Endothelial cell of umbilical vein (primary cell): ENCODE measurements at regions of chr9 and their contacts with region 1.

Region 1: DNA sequence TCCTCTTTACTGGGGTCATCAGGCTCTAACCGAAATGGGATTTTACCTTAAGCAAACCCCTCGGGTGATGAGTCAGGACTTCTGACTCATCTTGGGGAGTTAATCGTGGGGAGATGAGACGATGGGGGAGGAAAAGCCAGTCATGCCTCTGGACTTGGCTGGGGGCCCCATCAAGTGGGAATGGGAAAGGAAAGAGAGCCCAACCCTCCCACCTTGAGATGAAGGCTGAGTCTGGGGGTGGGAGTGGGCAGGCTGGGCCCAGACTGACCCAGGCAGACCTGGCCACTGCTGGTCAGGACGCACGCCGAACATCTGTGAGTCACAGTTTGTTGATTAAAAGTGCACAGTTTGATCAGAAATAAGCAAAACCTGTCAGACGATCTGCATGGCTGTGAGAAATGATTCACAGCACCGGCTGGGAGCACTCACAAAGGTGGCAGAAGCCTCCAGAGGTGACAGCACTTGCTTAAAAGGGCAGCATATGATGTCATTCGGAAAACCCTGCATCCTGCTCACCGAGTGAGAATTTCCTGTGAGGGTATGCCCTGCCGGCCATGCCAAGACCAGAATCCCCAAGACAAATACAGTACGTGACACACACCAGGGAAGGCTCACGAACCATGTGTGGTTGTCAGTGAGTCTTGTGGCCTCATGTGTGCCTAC is 50.0 kb upstream of the SLC25A51 start:
- DNase-seq: peak; percentile 97
- H3K4me3 ChIP-seq: no peak overlapping the region
- H3K27ac ChIP-seq: peak overlapping the region; percentile 71
- H3K4me1 ChIP-seq: peaks cover 21% of the 10 kb centered on the region
- H3K27me3 ChIP-seq: no peaks in the 10 kb centered on the region
- CTCF ChIP-seq: no peak
- POLR2A ChIP-seq: peak; percentile 46

Region 2: GRCh38 chr9:37923136-37923795 is 30.6 kb before region 1 on chr9:
- CTCF ChIA-PET with region 1: no interaction called
- POLR2A ChIA-PET with region 1: no interaction called
- dilution Hi-C with region 1: no loop called
- intact Hi-C with region 1: no loop called
- DNase-seq: no peak
- H3K4me3 ChIP-seq: no peak overlapping the region
- H3K27ac ChIP-seq: no peak overlapping the region
- H3K4me1 ChIP-seq: peaks cover 22% of the 10 kb centered on the region
- H3K27me3 ChIP-seq: no peaks in the 10 kb centered on the region
- CTCF ChIP-seq: no peak
- POLR2A ChIP-seq: no peak

Region 3: GRCh38 chr9:37938121-37938891 is 15.6 kb before region 1 on chr9:
- CTCF ChIA-PET with region 1: interaction called, 3 read pairs
- POLR2A ChIA-PET with region 1: no interaction called
- dilution Hi-C with region 1: no loop called
- intact Hi-C with region 1: loop called (anchors 2 kb)
- DNase-seq: peak; percentile 90
- H3K4me3 ChIP-seq: no peak overlapping the region
- H3K27ac ChIP-seq: peak overlapping the region; percentile 77
- H3K4me1 ChIP-seq: peaks cover 39% of the 10 kb centered on the region
- H3K27me3 ChIP-seq: no peaks in the 10 kb centered on the region
- CTCF ChIP-seq: no peak
- POLR2A ChIP-seq: no peak

Region 4: DNA sequence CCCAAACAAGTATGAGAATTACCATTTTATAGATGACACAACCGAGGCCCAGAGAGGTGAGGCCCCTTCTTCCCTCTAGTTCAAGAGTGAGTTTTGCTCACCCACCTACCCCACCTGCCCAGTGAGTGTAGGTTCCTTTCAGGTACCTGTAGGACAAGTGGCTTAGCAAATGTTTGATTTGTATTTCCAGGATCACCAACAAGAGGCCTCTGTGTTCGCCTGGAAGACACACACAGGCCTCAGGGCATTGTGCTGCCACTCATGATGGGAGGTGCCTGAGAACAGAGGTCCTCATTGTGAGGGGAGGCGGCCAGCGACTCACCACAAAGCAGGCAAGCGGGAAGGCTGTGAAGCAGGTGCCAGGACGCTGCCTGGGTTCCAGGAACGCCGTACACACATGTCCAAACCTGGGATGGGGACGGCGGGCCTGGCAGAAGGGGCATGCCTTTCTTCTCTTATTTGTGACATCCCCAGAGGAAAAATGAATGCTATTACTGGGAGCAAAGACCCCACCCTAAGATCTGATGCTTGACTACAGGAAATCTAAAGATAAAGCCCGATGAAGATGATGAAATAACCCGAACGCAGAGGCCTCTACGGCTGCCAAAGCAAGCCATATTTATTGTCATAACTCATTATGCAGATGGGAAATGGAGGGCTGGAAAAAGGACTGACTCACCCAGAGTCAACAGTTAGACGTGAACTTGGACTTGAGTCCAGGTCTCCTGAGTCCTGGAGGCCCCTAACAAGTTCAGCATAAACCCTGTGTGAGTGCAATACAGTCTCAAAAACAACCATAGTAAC is 10.2 kb after region 1 on chr9:
- CTCF ChIA-PET with region 1: interaction called, 3 read pairs
- POLR2A ChIA-PET with region 1: no interaction called
- dilution Hi-C with region 1: no loop called
- intact Hi-C with region 1: loop called (anchors 1 kb)
- DNase-seq: peak; percentile 94
- H3K4me3 ChIP-seq: no peak overlapping the region
- H3K27ac ChIP-seq: peak overlapping the region; percentile 67
- H3K4me1 ChIP-seq: peaks cover 41% of the 10 kb centered on the region
- H3K27me3 ChIP-seq: no peaks in the 10 kb centered on the region
- CTCF ChIP-seq: no peak
- POLR2A ChIP-seq: no peak

Region 5: DNA sequence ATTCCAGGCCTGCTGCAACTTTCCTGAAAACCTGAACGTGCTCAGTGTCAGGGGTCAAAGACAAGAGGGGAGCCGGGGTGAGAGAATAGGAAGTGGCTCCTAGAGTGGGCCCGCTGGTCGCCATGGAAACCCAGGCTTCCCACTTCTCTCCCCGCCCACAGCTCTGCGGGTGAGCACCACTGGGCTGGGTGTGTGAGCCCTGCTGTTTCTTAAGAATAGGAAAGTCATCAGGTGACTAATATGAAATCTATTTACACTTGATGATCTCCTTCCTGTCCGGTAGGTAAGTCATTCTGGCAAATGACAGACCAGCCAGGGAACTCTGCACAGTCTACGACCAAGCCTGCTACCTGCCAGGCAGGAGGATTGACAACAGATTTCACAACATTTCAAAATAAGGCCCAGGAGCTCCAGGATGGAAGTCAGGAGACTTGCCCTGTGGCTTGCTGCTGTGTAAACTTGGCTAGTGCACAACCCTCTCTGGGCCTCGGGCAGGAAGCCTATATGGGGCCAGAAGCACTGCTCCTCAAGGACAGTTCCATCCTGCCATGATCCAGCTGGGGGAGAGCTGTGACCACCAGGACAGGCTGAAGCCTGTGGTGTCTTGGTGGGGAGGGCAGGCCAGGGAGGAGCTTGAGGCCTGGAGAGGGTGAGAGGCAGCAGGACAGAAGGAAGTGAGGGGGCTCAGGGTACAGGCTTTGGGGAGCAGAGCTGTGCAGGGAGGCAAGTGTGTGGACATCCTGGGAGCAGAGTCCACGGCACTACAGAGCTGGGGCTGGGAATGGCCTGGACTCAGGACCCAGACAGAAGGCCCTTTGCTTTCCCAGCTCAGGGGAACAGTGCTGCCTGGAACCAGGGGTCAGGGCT is 54.5 kb after region 1 on chr9:
- CTCF ChIA-PET with region 1: no interaction called
- POLR2A ChIA-PET with region 1: no interaction called
- dilution Hi-C with region 1: no loop called
- intact Hi-C with region 1: loop called (anchors 5 kb)
- DNase-seq: peak; percentile 80
- H3K4me3 ChIP-seq: no peak overlapping the region
- H3K27ac ChIP-seq: peak overlapping the region; percentile 79
- H3K4me1 ChIP-seq: peaks cover 30% of the 10 kb centered on the region
- H3K27me3 ChIP-seq: no peaks in the 10 kb centered on the region
- CTCF ChIP-seq: no peak
- POLR2A ChIP-seq: no peak

Region 6: DNA sequence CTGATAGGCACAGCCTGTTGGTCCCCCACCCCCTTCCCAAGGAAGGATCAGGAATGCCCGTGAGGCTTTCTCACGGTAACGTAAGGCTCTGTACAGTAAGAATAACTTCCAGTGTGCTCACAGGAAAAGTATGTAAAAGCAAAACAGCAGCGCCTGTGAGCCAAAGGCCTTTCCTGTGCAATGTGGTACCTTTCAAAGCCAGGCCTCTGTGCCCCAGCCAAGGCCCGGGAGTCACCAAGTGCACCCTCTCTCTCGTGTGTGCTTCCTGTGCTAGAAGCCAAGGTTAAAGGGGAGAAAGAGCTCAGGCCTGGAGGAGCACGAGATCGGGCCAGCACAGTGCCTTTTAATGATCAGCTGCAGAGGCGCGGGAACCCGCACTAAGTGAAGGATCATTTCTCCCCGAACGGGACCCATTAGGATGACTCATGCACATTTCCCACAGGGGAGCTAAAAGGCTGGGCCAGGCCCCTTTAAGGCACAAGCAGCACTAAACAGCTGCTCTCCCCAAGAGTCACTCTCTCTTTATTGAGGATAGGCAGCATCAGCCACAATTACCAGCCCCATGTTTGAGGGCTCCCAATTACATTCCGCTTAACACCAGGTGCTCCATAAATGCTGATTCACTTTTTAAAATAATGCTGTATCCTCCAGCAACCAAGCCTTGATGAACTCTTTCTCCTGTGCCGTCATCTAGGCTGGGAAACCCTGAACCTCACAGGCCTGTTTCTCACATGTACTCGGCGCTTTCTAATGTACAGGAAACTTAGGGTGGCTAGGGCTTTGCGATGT is 72.3 kb after region 1 on chr9:
- CTCF ChIA-PET with region 1: no interaction called
- POLR2A ChIA-PET with region 1: no interaction called
- dilution Hi-C with region 1: no loop called
- intact Hi-C with region 1: loop called (anchors 1 kb)
- DNase-seq: peak; percentile 98
- H3K4me3 ChIP-seq: no peak overlapping the region
- H3K27ac ChIP-seq: peak overlapping the region; percentile 97
- H3K4me1 ChIP-seq: peaks cover 35% of the 10 kb centered on the region
- H3K27me3 ChIP-seq: no peaks in the 10 kb centered on the region
- CTCF ChIP-seq: no peak
- POLR2A ChIP-seq: no peak